ENCODE measurements at regions of chr7 and their contacts with region 1.

Region 1: DNA sequence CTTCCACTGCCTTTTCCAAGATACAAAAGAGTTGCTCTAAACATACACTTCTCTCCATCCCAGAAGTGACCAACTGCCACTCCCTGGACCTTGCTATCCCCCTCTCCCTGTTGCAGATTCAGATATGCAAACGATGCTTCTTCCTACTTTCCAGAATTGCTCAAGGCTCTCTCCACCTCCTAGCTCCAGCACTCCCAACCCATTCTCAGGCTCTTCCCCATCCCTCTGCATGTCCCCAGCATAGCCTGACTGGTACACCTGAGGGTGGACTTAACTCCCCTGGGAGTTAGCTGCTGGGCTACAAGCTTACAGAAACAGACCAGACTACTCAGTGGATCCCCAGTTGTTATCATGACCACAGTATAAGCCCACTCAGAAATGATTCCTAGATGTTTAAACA is 27.6 kb downstream of the MKRN1 start:
- DNase-seq: no peak
- H3K4me3 ChIP-seq: no peak overlapping the region
- H3K27ac ChIP-seq: no peak overlapping the region
- H3K4me1 ChIP-seq: no peaks in the 10 kb centered on the region
- H3K27me3 ChIP-seq: no peaks in the 10 kb centered on the region
- CTCF ChIP-seq: no peak

Region 2: DNA sequence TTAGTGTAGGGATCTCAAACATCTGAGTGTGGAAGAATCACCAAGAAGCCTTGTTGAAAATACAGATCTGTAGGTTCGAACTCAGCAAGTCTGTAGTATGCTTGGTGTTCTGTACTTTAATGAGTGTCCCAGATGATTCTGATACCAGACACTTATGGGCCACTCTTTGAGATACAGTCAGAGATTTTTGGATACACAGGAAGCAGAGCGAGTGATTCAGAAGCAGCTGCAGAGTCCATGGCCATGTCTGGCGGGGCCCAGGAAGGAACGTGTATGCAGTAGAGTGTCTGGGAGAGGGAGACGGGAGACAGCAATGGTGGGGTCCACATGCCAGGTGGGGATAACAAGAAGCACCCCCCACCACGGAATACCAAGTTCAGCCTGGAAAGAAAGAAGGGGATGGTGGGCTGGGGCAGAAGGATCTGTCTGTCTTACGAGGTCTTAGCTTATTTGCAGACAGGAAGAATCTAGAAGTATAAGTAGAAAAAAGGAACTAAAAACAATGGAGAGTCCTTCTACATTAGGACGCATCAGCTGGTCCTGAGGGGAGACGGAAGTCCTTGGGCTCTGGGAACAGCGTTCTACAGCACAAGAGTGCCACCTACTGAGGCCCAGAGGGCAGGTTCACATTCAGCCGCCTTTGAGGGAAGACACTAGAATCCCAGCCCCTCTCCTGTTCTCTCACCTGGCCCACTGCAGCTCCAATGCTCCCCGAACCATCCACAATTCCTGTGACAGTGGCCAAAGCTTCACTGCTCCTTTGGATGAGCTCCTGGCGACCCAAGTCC is 108.8 kb before region 1 on chr7:
- CTCF ChIA-PET with region 1: no interaction called
- dilution Hi-C with region 1: loop called (anchors 5 kb)
- in situ Hi-C with region 1: no loop called
- intact Hi-C with region 1: no loop called
- DNase-seq: peak; percentile 6
- H3K4me3 ChIP-seq: no peak overlapping the region
- H3K27ac ChIP-seq: no peak overlapping the region
- H3K4me1 ChIP-seq: no peaks in the 10 kb centered on the region
- H3K27me3 ChIP-seq: no peaks in the 10 kb centered on the region
- CTCF ChIP-seq: peak; percentile 19 to 54

Region 3: DNA sequence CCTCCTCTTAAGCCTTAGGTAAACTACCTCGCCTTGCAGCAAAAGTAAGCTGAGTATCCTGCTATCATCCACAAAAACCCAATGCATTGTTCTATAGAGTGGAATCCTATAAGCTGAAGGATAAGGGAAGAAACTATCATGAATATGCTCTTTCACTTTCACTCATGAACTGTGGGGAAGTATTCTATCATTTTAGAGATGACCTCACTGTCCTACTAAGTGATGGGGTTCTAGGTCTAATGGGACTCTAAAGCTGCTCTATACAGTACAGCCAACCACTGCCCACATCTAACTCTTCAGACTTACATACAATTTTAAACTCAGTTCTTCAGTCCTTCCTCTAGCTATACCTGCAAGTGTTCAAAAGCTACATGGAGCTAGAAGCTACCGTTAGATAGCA is 11.4 kb after region 1 on chr7:
- CTCF ChIA-PET with region 1: interaction called, 19 read pairs
- dilution Hi-C with region 1: no loop called
- in situ Hi-C with region 1: no loop called
- intact Hi-C with region 1: no loop called
- DNase-seq: no peak
- H3K4me3 ChIP-seq: no peak overlapping the region
- H3K27ac ChIP-seq: no peak overlapping the region
- H3K4me1 ChIP-seq: no peaks in the 10 kb centered on the region
- H3K27me3 ChIP-seq: no peaks in the 10 kb centered on the region
- CTCF ChIP-seq: no peak

Region 4: GRCh38 chr7:140534743-140535142 is 83.0 kb after region 1 on chr7:
- CTCF ChIA-PET with region 1: no interaction called
- dilution Hi-C with region 1: loop called (anchors 5 kb)
- in situ Hi-C with region 1: no loop called
- intact Hi-C with region 1: no loop called
- DNase-seq: no peak
- H3K4me3 ChIP-seq: no peak overlapping the region
- H3K27ac ChIP-seq: no peak overlapping the region
- H3K4me1 ChIP-seq: peaks cover 4% of the 10 kb centered on the region
- H3K27me3 ChIP-seq: no peaks in the 10 kb centered on the region
- CTCF ChIP-seq: no peak

Measured in mammary epithelial cell (primary cell).